Activated CD4-positive, alpha-beta T cell treated with anti-CD3 and anti-CD28 coated beads, Interleukin-2, amount 10 ng/mL, durations not matched to agents 24 days and 14 days (primary cell): ENCODE measurements at regions of chr5 and their contacts with region 1.

Region 1: GRCh38 chr5:10353241-10354047 is at the start of gene MARCHF6:
- DNase-seq: peak; percentile 98
- H3K4me3 Mint-ChIP-seq: peak within 1 kb of the TSS; percentile 98
- H3K27ac Mint-ChIP-seq: peak within 1 kb of the TSS; percentile 100
- H3K4me1 Mint-ChIP-seq: peaks cover 28% of the 10 kb centered on the region
- H3K27me3 Mint-ChIP-seq: no peaks in the 10 kb centered on the region
- total RNA-seq, gene MARCHF6: 106 and 113 TPM in 2 replicates

Region 2: GRCh38 chr5:10249948-10250803 is 103.3 kb before region 1 on chr5 and contains the start of gene CCT5:
- intact Hi-C with region 1: loop called (anchors 1 kb)
- DNase-seq: peak; percentile 97
- H3K4me3 Mint-ChIP-seq: peak within 1 kb of the TSS; percentile 96
- H3K27ac Mint-ChIP-seq: peak within 1 kb of the TSS; percentile 96
- H3K4me1 Mint-ChIP-seq: peaks cover 40% of the 10 kb centered on the region
- H3K27me3 Mint-ChIP-seq: peaks cover 3% of the 10 kb centered on the region
- total RNA-seq, gene CCT5: 566 and 581 TPM in 2 replicates

Region 3: GRCh38 chr5:10441083-10441991 is 87.9 kb after region 1 on chr5 and contains the start of gene ROPN1L:
- intact Hi-C with region 1: loop called (anchors 1 kb)
- DNase-seq: peak; percentile 96
- H3K4me3 Mint-ChIP-seq: peak within 1 kb of the TSS; percentile 88
- H3K27ac Mint-ChIP-seq: no peak within 1 kb of the TSS
- H3K4me1 Mint-ChIP-seq: peaks cover 31% of the 10 kb centered on the region
- H3K27me3 Mint-ChIP-seq: peaks cover 7% of the 10 kb centered on the region
- total RNA-seq, gene ROPN1L: not detected in 2 replicates

Region 4: DNA sequence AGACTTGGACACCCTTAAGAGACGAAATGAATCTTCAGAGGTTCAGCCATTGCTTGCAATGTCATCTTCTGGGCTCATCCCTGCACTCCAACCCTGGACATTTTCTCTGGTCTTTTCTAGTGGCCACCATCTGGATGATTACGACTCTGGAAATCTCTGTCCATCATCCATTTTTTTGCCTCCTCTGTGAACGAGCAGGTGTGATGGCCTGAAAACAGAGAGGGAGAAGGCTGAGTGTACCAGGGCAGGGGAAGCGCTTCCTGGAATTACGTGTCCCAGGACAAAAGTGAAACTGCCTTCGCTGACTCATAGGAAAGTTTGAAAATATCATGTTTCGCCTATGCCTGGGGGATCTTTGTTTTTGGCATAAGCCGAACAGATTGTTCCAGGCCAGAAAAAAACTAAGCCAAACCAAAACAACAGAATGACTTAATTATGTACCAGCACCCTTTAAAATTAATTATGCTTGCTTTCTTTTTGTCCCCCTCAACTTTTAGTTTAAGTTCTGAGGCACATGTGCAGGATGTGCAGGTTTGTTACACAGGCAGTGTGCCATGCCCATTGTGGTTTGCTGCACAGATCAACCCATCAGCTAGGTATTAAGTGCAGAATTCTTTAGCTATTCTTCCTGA is 242.3 kb after region 1 on chr5:
- intact Hi-C with region 1: loop called (anchors 10 kb)
- DNase-seq: peak; percentile 83
- H3K4me3 Mint-ChIP-seq: peak overlapping the region; percentile 44
- H3K27ac Mint-ChIP-seq: peak overlapping the region; percentile 80
- H3K4me1 Mint-ChIP-seq: peaks cover 61% of the 10 kb centered on the region
- H3K27me3 Mint-ChIP-seq: no peaks in the 10 kb centered on the region

Region 5: DNA sequence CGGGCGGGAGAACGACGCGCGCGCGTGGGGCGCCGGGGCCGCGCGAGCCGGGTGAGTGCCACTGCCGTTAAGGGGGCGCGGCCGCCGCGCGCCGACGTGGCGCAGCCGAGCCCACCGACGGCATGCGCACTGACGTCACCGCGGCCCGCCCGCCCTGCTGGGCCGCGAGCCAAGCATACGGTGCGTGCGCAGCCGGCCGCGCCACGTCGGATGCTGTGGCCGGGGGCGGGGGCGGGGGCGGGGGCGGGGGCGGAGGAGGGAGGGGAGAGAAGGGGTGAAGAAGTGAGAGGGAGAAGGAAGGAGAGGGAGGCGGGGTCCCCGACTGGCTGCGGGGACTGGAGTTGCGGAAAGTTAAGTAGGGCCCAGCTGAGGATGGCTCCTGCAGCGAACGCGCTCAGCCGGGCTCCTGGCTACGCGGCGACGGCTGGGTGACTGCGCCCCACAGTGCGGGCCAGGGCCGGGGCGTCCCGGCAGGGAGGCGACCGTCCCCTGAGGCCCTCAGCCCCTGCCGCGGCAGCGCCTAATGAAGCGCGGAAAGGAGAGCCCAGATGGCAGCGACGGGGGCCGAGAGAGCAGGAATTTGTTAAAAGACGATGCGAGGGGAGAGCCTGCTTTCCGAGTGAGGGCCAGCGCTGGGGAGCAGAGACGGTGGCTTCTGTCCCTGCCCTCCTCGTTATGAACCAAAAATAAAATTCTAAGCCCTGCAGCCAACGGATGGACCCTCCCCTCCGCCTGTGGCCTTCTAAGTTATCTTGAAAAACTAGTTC is 407.9 kb after region 1 on chr5 and contains the start of gene DAP:
- intact Hi-C with region 1: loop called (anchors 5 kb)
- DNase-seq: peak; percentile 97
- H3K4me3 Mint-ChIP-seq: peak within 1 kb of the TSS; percentile 91
- H3K27ac Mint-ChIP-seq: peak within 1 kb of the TSS; percentile 85
- H3K4me1 Mint-ChIP-seq: peaks cover 42% of the 10 kb centered on the region
- H3K27me3 Mint-ChIP-seq: peaks cover 16% of the 10 kb centered on the region
- total RNA-seq, gene DAP: 54.5 and 54.9 TPM in 2 replicates